Heart left ventricle (tissue), 16 donors: ENCODE measurements at regions of chr2 and their contacts with region 1.

Region 1: GRCh38 chr2:144516981-144517865 is 2.7 kb downstream of the ZEB2 start:
- DNase-seq: peak; percentile 56 to 82 (median 73)
- ATAC-seq: peak; percentile 9 to 71 (median 54)
- H3K4me3 ChIP-seq: peak overlapping the region; percentile 63 to 96 (median 82)
- H3K27ac ChIP-seq: peak overlapping the region; percentile 91 to 99 (median 98)
- H3K4me1 ChIP-seq: peaks cover 0 to 31% (median 13%) of the 10 kb centered on the region in 12 donors
- H3K27me3 ChIP-seq: peaks cover 0 to 6% (median 0%) of the 10 kb centered on the region in 9 donors
- CTCF ChIP-seq: no peak
- POLR2A ChIP-seq: peak in 1 of 2 donors; percentile 17

Region 2: DNA sequence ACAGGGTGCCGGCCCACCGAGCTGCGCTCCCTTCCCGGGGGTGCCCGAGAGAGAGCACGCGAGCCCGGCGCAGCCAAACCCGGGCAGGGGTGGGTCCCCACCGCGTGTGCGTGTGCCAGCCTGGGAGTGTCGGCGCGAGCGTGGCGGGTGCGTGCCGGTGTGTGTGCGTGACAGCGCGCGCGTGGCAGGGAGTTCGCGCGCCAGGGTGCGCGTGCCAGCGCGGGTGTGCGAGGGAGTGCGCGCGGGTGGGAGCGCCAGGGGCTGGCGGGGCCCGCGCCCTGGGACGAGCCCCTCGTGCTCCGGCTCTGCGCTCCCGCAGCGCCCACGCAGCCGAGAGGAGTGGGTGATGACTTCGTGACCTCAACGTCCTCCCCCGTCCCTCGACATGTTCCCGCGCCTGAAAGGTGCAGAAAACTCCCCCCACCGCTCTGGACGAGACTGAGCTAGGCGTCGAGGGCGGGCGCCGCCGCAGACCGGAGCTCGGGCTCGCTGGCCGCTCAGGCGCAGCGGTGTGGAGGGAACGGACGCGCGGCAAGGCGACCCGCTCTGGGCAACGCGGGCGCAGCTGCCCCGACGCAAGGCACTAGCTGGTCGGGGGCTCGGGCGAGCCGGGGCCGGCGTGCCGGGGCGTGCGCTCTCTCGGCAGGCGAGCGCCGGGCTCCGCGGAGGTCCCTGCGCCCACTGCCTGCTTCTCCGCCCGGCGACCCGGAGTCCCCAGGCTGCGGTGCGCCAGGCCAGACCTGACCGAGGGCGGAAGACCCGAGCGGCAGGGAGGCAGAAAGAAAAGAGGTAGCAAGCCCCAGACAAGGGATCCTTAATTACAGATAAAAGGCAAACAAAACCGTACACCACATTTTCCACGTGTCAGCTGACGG is 580.1 kb before region 1 on chr2:
- intact Hi-C with region 1: loop called in 2 of 10 experiments (anchors 5 to 10 kb)
- DNase-seq: peak; percentile 22 to 70 (median 38)
- ATAC-seq: peak in 3 of 4 donors; percentile 56 to 87 (median 83)
- H3K4me3 ChIP-seq: peak overlapping the region; percentile 40 to 68 (median 60)
- H3K27ac ChIP-seq: peak overlapping the region in 11 of 12 donors; percentile 11 to 80 (median 48)
- H3K4me1 ChIP-seq: peaks cover 0 to 17% (median 4%) of the 10 kb centered on the region in 12 donors
- H3K27me3 ChIP-seq: peaks cover 0 to 24% (median 0%) of the 10 kb centered on the region in 9 donors
- CTCF ChIP-seq: no peak
- POLR2A ChIP-seq: no peak

Region 3: GRCh38 chr2:144402251-144402650 is 115.0 kb before region 1 on chr2:
- intact Hi-C with region 1: loop called in 1 of 10 experiments (anchors 10 kb)
- DNase-seq: peak in 2 of 5 donors; percentile 33 to 47
- ATAC-seq: peak in 2 of 4 donors; percentile 44 to 48
- H3K4me3 ChIP-seq: no peak overlapping the region
- H3K27ac ChIP-seq: peak overlapping the region in 7 of 12 donors; percentile 0 to 42 (median 11)
- H3K4me1 ChIP-seq: peaks cover 0 to 45% (median 17%) of the 10 kb centered on the region in 12 donors
- H3K27me3 ChIP-seq: no peaks in the 10 kb centered on the region
- CTCF ChIP-seq: no peak
- POLR2A ChIP-seq: no peak

Region 4: GRCh38 chr2:144456680-144457079 is 60.5 kb before region 1 on chr2:
- intact Hi-C with region 1: loop called in 4 of 10 experiments (anchors 5 kb)
- DNase-seq: peak in 1 of 5 donors; percentile 38
- ATAC-seq: peak; percentile 50 to 89 (median 68)
- H3K4me3 ChIP-seq: no peak overlapping the region
- H3K27ac ChIP-seq: peak overlapping the region in 6 of 12 donors; percentile 31 to 73 (median 46)
- H3K4me1 ChIP-seq: peaks cover 0 to 100% (median 74%) of the 10 kb centered on the region in 12 donors
- H3K27me3 ChIP-seq: no peaks in the 10 kb centered on the region
- CTCF ChIP-seq: no peak
- POLR2A ChIP-seq: no peak

Region 5: GRCh38 chr2:144529841-144530240 is 12.6 kb after region 1 on chr2:
- intact Hi-C with region 1: no loop called
- DNase-seq: no peak
- ATAC-seq: peak; percentile 64 to 82 (median 72)
- H3K4me3 ChIP-seq: no peak overlapping the region
- H3K27ac ChIP-seq: no peak overlapping the region
- H3K4me1 ChIP-seq: peaks cover 0 to 17% (median 0%) of the 10 kb centered on the region in 12 donors
- H3K27me3 ChIP-seq: no peaks in the 10 kb centered on the region
- CTCF ChIP-seq: no peak
- POLR2A ChIP-seq: no peak

Region 6: GRCh38 chr2:144643537-144644336 is 126.5 kb after region 1 on chr2:
- intact Hi-C with region 1: no loop called
- DNase-seq: no peak
- ATAC-seq: no peak
- H3K4me3 ChIP-seq: no peak overlapping the region
- H3K27ac ChIP-seq: no peak overlapping the region
- H3K4me1 ChIP-seq: peaks cover 0 to 25% (median 0%) of the 10 kb centered on the region in 12 donors
- H3K27me3 ChIP-seq: no peaks in the 10 kb centered on the region
- CTCF ChIP-seq: no peak
- POLR2A ChIP-seq: no peak

Region 7: GRCh38 chr2:144890828-144891227 is 373.6 kb after region 1 on chr2:
- intact Hi-C with region 1: loop called in 1 of 10 experiments (anchors 10 kb)
- DNase-seq: no peak
- ATAC-seq: peak; percentile 20 to 47 (median 35)
- H3K4me3 ChIP-seq: no peak overlapping the region
- H3K27ac ChIP-seq: no peak overlapping the region
- H3K4me1 ChIP-seq: peaks cover 0 to 21% (median 3%) of the 10 kb centered on the region in 12 donors
- H3K27me3 ChIP-seq: no peaks in the 10 kb centered on the region
- CTCF ChIP-seq: peak in 4 of 12 donors; percentile 8 to 23 (median 12)
- POLR2A ChIP-seq: no peak

Region 8: GRCh38 chr2:145012214-145012670 is 495.0 kb after region 1 on chr2:
- intact Hi-C with region 1: loop called in 1 of 10 experiments (anchors 5 kb)
- DNase-seq: peak in 2 of 5 donors; percentile 38 to 43
- ATAC-seq: peak; percentile 62 to 85 (median 76)
- H3K4me3 ChIP-seq: no peak overlapping the region
- H3K27ac ChIP-seq: peak overlapping the region in 3 of 12 donors; percentile 6 to 24 (median 9)
- H3K4me1 ChIP-seq: peaks cover 0 to 17% (median 4%) of the 10 kb centered on the region in 12 donors
- H3K27me3 ChIP-seq: no peaks in the 10 kb centered on the region
- CTCF ChIP-seq: no peak
- POLR2A ChIP-seq: no peak

Region 9: GRCh38 chr2:145752091-145752806 is 1235.0 kb after region 1 on chr2:
- intact Hi-C with region 1: loop called in 6 of 10 experiments (anchors 5 to 10 kb)
- DNase-seq: peak in 2 of 5 donors; percentile 13 to 34
- ATAC-seq: peak; percentile 64 to 82 (median 74)
- H3K4me3 ChIP-seq: peak overlapping the region in 2 of 12 donors; percentile 3 to 6
- H3K27ac ChIP-seq: peak overlapping the region in 11 of 12 donors; percentile 2 to 85 (median 50)
- H3K4me1 ChIP-seq: peaks cover 0 to 40% (median 18%) of the 10 kb centered on the region in 12 donors
- H3K27me3 ChIP-seq: no peaks in the 10 kb centered on the region
- CTCF ChIP-seq: peak; percentile 29 to 69 (median 55)
- POLR2A ChIP-seq: no peak